Activated naive CD4-positive, alpha-beta T cell treated with anti-CD3 and anti-CD28 coated beads, Interleukin-2, amount 10 ng/mL, durations not matched to agents 7 days and 5 days (primary cell): ENCODE measurements at regions of chr17 and their contacts with region 1.

Region 1: DNA sequence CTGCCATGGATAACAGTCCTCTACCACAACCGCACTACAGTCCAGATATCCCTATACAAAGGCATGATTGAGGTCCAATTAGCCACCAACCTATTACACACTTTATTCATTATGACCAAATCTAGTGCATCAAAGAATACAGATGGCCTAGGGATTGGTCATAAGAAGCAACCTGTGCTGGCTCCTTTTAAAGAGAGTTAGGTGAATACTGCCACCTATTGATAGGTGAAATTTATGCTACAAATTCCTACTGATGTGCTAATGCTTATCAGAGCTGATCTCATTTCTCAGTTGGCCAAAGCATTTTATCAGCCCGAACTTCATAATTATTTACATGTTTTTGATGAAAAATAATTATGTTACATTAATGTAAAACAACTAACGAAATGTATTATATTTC is 166.2 kb downstream of the ANKFN1 start:
- DNase-seq: no peak
- H3K4me3 Mint-ChIP-seq: no peak overlapping the region
- H3K27ac Mint-ChIP-seq: no peak overlapping the region
- H3K4me1 Mint-ChIP-seq: no peaks in the 10 kb centered on the region
- H3K27me3 Mint-ChIP-seq: peaks cover 4% of the 10 kb centered on the region

Region 2: DNA sequence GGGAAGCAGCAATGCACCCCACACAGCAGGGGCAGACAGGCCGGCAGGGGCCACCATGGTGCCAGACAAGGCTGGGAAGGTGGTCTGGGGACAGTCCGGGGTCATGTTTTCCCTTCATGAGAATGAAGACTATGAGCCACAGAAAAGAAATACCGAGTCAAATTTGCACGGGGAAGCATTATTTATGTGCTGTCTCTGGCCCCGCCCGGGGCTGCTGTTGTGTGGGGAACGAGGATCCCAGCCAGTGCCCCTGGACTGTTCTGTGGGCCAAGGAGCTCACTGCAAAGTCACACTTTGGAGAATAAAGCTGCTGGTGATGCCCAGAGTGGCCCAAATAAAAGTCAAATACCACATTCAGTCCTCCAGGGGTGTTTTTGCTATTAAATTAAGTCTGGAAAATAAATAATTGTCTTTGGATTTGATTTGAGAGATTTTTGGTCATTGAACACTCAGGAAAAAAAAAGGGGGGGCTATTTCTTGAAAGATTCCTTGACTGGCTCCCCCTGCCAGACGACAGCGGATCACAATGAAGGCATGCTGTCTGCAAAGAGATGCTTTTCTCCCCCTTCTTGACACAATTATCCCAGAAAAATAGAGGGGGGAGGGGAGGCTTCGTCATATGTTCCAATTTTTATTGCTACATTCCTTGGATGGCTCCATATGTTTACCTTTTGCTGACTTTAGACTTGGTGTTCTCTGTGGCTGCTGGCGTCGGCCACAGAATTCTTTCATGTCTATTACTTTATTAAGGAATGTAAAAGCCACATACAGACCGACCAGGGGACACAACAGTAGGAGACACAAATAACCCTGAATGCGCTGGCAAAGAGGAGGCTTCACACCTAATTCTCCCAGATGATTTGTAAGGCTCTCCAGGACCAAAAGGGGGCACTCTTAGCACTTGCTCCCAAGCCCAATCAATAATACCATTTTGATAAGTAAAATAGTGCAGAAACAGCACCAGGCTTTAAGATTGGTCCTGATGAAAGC is 193.4 kb before region 1 on chr17:
- CTCF ChIA-PET with region 1: interaction called, 37 read pairs
- DNase-seq: peak; percentile 32
- H3K4me3 Mint-ChIP-seq: no peak overlapping the region
- H3K27ac Mint-ChIP-seq: no peak overlapping the region
- H3K4me1 Mint-ChIP-seq: no peaks in the 10 kb centered on the region
- H3K27me3 Mint-ChIP-seq: peaks cover 4% of the 10 kb centered on the region

Region 3: DNA sequence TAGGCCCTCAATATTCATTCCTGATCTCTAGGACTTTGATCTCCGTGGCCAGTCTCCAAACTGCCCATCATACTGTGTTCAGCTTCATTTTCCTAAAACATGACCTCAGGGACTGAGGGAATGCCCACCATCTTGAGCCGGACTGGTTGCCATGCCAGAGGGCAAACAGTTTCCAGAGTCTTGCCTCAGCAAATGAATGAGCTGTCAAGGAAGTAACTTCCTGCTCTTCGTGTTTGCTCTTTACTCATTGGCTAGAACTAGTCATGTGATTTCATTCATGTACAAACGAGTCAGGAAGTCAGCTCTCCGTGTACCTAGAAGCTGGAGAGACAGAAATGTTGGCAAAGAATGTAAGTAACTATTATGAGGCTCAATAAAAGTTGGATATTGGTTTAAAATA is 116.1 kb before region 1 on chr17:
- CTCF ChIA-PET with region 1: no interaction called
- DNase-seq: no peak
- H3K4me3 Mint-ChIP-seq: no peak overlapping the region
- H3K27ac Mint-ChIP-seq: no peak overlapping the region
- H3K4me1 Mint-ChIP-seq: peaks cover 5% of the 10 kb centered on the region
- H3K27me3 Mint-ChIP-seq: no peaks in the 10 kb centered on the region

Region 4: DNA sequence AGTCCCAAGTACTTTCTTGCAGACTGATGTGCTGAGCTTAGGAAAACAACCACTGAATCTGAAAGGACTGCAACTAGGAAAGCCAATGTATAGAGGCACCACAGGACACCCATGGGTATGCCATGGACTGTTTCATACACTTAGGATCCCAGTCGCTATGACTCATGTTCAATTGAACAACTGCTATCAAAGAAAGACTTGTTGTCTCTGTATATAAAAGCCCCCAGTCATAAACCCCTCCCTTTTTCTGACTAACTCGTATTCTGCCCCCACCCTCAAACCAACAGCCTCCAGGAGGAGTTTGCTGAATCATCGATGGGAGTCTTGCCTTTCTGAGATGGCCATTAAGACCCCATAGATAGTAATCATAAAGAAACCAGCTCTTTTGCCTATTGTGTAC is 39.1 kb after region 1 on chr17:
- CTCF ChIA-PET with region 1: no interaction called
- DNase-seq: no peak
- H3K4me3 Mint-ChIP-seq: no peak overlapping the region
- H3K27ac Mint-ChIP-seq: no peak overlapping the region
- H3K4me1 Mint-ChIP-seq: no peaks in the 10 kb centered on the region
- H3K27me3 Mint-ChIP-seq: no peaks in the 10 kb centered on the region